ENCODE measurements at regions of chr5 and their contacts with region 1.

Region 1: DNA sequence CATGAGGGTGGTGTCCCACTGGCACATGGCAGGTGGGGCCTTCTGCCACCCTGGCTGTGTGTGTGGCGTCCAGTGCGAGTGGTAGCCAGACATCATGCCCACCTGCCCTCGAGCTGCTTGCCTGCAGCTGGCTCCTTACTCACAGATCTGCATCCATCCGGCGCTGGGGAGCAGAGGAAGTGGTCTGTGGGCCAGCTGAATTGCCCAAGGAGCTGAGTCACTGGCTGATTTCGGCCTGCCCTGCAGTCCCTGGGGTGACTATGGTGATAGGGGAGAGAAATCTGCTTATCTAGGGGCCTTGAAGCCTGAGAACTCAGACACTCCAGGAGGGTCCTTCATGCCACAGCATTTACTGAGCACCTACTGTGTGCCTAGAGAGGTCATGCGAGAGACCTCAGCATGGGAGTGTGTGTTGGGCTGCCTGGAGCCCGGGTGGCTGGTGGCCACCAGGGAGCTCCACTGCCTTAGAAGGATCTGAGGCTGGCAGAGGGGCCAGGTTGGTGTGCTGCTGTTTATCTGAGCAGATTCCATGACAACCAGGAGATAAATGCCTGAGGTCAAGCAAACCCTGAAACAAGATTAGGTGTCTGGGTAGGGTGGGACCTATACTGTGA is 57.1 kb downstream of the SLC22A5 start:
- DNase-seq: peak; percentile 67
- H3K4me3 ChIP-seq: no peak overlapping the region
- H3K27ac ChIP-seq: peak overlapping the region; percentile 78 to 80
- H3K4me1 ChIP-seq: peaks cover 39 to 62% of the 10 kb centered on the region in 2 experiments
- H3K27me3 ChIP-seq: no peaks in the 10 kb centered on the region
- CTCF ChIP-seq: peak; percentile 55
- EP300 ChIP-seq: peak in 1 of 2 experiments; percentile 60; a peak in 1 of 4 replicates
- RAD21 ChIP-seq: peak; percentile 46

Region 2: GRCh38 chr5:132369474-132370180 is 57.0 kb before region 1 on chr5 and contains the start of gene SLC22A5:
- CTCF ChIA-PET with region 1: no interaction called
- POLR2A ChIA-PET with region 1: no interaction called
- DNase-seq: peak; percentile 95
- H3K4me3 ChIP-seq: peak within 1 kb of the TSS; percentile 65 to 66
- H3K27ac ChIP-seq: peak within 1 kb of the TSS in 1 of 2 experiments; percentile 80; a peak in 2 of 4 replicates
- H3K4me1 ChIP-seq: peaks cover 9 to 13% of the 10 kb centered on the region in 2 experiments; a peak in 2 of 4 replicates
- H3K27me3 ChIP-seq: no peaks in the 10 kb centered on the region
- CTCF ChIP-seq: no peak
- EP300 ChIP-seq: no peak
- RAD21 ChIP-seq: no peak
- polyA plus RNA-seq, gene SLC22A5: 8.3 and 12.3 TPM in 2 replicates

Region 3: GRCh38 chr5:132410451-132411381 is 15.9 kb before region 1 on chr5:
- CTCF ChIA-PET with region 1: interaction called, 27 read pairs
- POLR2A ChIA-PET with region 1: no interaction called
- DNase-seq: peak; percentile 95
- H3K4me3 ChIP-seq: peak overlapping the region; percentile 71 to 76
- H3K27ac ChIP-seq: peak overlapping the region; percentile 81 to 89
- H3K4me1 ChIP-seq: peaks cover 19 to 26% of the 10 kb centered on the region in 2 experiments
- H3K27me3 ChIP-seq: no peaks in the 10 kb centered on the region
- CTCF ChIP-seq: peak; percentile 62
- EP300 ChIP-seq: 0 out of 4 replicates have a peak, but pooled peaks of 1 of the 2 experiments have one; percentile 6
- RAD21 ChIP-seq: peak; percentile 52

Region 4: GRCh38 chr5:132479111-132479951 is 52.7 kb after region 1 on chr5:
- CTCF ChIA-PET with region 1: interaction called, 12 read pairs
- POLR2A ChIA-PET with region 1: no interaction called
- DNase-seq: no peak
- H3K4me3 ChIP-seq: no peak overlapping the region
- H3K27ac ChIP-seq: no peak overlapping the region
- H3K4me1 ChIP-seq: peaks cover 0 to 23% of the 10 kb centered on the region in 2 experiments; a peak in 1 of 4 replicates
- H3K27me3 ChIP-seq: no peaks in the 10 kb centered on the region
- CTCF ChIP-seq: no peak
- EP300 ChIP-seq: no peak
- RAD21 ChIP-seq: no peak

Region 5: GRCh38 chr5:132490486-132491367 is 64.1 kb after region 1 on chr5 and contains the start of gene IRF1:
- CTCF ChIA-PET with region 1: interaction called, 37 read pairs
- POLR2A ChIA-PET with region 1: interaction called, 15 read pairs
- DNase-seq: peak; percentile 99
- H3K4me3 ChIP-seq: peak within 1 kb of the TSS; percentile 86 to 89
- H3K27ac ChIP-seq: peak within 1 kb of the TSS; percentile 89 to 90
- H3K4me1 ChIP-seq: peaks cover 12 to 26% of the 10 kb centered on the region in 2 experiments
- H3K27me3 ChIP-seq: no peaks in the 10 kb centered on the region
- CTCF ChIP-seq: no peak; the same call in 1 of the 2 replicates
- EP300 ChIP-seq: no peak
- RAD21 ChIP-seq: no peak
- polyA plus RNA-seq, gene IRF1: 13.8 and 15.2 TPM in 2 replicates

Region 6: GRCh38 chr5:132500931-132501630 is 74.4 kb after region 1 on chr5:
- CTCF ChIA-PET with region 1: interaction called, 50 read pairs
- POLR2A ChIA-PET with region 1: interaction called, 13 read pairs
- DNase-seq: peak; percentile 82
- H3K4me3 ChIP-seq: peak overlapping the region in 1 of 2 experiments; percentile 20; a peak in 1 of 4 replicates
- H3K27ac ChIP-seq: no peak overlapping the region; a peak in 1 of 4 replicates
- H3K4me1 ChIP-seq: peaks cover 12 to 15% of the 10 kb centered on the region in 2 experiments; a peak in 2 of 4 replicates
- H3K27me3 ChIP-seq: no peaks in the 10 kb centered on the region
- CTCF ChIP-seq: peak; percentile 85
- EP300 ChIP-seq: no peak
- RAD21 ChIP-seq: peak; percentile 90

Region 7: GRCh38 chr5:132591145-132591544 is 164.5 kb after region 1 on chr5:
- CTCF ChIA-PET with region 1: no interaction called
- POLR2A ChIA-PET with region 1: no interaction called
- DNase-seq: peak; percentile 4
- H3K4me3 ChIP-seq: no peak overlapping the region
- H3K27ac ChIP-seq: no peak overlapping the region
- H3K4me1 ChIP-seq: peaks cover 0 to 8% of the 10 kb centered on the region in 2 experiments; a peak in 3 of 4 replicates
- H3K27me3 ChIP-seq: no peaks in the 10 kb centered on the region
- CTCF ChIP-seq: peak; percentile 43
- EP300 ChIP-seq: no peak
- RAD21 ChIP-seq: peak; percentile 44

Measured in SK-N-SH (cell line).